Psoas muscle (tissue), 8 donors: ENCODE measurements at regions of chr1 and their contacts with region 1.

Region 1: GRCh38 chr1:209692745-209693504 is 11.7 kb upstream of the HSD11B1 start:
- DNase-seq: peak; percentile 77 to 81
- ATAC-seq: peak; percentile 76 to 92 (median 82)
- H3K4me3 ChIP-seq: no peak overlapping the region
- H3K27ac ChIP-seq: no peak overlapping the region
- H3K4me1 ChIP-seq: no peaks in the 10 kb centered on the region
- H3K27me3 ChIP-seq: no peaks in the 10 kb centered on the region
- CTCF ChIP-seq: peak; percentile 85

Region 2: DNA sequence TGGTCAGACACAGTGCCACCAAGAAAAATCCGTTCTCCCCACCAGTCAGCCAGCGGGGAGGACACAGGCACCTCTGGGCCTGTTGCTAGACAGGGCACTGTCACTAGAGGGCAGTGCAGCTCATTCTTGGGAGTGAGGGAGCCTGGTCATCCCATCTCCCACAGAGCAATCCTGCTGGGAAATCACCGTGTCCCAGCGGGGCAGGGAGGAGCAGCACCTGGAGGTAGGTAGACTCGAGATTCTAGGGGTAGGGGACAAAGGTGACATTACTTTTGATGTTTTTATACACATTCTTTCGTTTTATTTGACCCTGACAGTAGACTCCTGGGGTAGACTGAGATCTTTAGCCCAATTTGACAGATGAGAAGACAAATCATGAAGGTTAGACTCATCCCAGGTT is 116.1 kb before region 1 on chr1:
- intact Hi-C with region 1: loop called (anchors 1 to 5 kb)
- DNase-seq: peak; percentile 80 to 88
- ATAC-seq: peak; percentile 94 to 100 (median 98)
- H3K4me3 ChIP-seq: no peak overlapping the region
- H3K27ac ChIP-seq: no peak overlapping the region
- H3K4me1 ChIP-seq: peaks cover 3% of the 10 kb centered on the region
- H3K27me3 ChIP-seq: peaks cover 0 to 7% (median 3%) of the 10 kb centered on the region in 3 donors
- CTCF ChIP-seq: peak; percentile 95

Region 3: DNA sequence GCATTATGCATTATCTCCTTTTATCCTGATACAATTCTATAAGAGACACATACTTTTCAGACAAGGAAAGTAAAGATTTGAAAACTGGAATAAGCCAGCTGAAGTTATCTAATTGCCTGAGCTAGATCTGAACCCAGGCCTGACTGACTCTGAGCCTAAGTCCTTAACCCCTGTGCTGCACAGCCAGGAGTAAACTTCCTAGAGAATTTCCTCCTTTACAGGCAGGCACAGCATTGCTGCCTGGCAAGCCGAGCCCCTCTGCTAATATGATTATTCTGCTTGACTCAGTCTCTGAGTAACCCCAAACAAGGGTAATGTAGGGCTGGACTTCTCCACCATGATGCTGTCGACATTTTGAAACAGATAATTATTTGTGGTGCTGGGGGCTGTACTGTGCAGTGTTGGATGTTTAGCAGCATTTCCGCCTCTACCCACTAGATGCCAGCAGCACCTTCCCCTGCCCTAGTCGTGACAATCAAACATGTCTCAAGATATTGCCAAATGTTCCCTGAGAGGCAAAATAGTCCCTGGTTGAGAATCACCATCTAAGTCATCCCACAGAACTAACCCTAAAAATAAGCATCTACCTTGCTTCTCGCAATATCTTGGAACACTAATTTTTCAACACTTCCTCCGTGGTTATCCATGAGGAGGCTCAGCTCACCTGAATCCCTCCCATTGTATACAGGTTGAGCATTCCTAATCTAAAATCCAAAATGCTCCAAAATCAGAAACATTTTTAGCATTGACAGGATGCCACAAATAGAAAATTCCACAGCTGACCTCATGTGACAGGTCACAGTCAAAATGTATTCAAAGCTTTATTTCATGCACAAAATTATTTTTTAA is 90.9 kb before region 1 on chr1:
- intact Hi-C with region 1: loop called (anchors 2 kb)
- DNase-seq: peak in 1 of 2 donors; percentile 61
- ATAC-seq: peak; percentile 91 to 100 (median 96)
- H3K4me3 ChIP-seq: no peak overlapping the region
- H3K27ac ChIP-seq: no peak overlapping the region
- H3K4me1 ChIP-seq: no peaks in the 10 kb centered on the region
- H3K27me3 ChIP-seq: no peaks in the 10 kb centered on the region
- CTCF ChIP-seq: peak; percentile 75

Region 4: GRCh38 chr1:209633335-209633997 is 59.5 kb before region 1 on chr1:
- intact Hi-C with region 1: loop called (anchors 5 kb)
- DNase-seq: no peak
- ATAC-seq: no peak
- H3K4me3 ChIP-seq: no peak overlapping the region
- H3K27ac ChIP-seq: no peak overlapping the region
- H3K4me1 ChIP-seq: peaks cover 19% of the 10 kb centered on the region
- H3K27me3 ChIP-seq: no peaks in the 10 kb centered on the region
- CTCF ChIP-seq: no peak